H1 (cell line): ENCODE measurements at regions of chr11 and their contacts with region 1.

Region 1: DNA sequence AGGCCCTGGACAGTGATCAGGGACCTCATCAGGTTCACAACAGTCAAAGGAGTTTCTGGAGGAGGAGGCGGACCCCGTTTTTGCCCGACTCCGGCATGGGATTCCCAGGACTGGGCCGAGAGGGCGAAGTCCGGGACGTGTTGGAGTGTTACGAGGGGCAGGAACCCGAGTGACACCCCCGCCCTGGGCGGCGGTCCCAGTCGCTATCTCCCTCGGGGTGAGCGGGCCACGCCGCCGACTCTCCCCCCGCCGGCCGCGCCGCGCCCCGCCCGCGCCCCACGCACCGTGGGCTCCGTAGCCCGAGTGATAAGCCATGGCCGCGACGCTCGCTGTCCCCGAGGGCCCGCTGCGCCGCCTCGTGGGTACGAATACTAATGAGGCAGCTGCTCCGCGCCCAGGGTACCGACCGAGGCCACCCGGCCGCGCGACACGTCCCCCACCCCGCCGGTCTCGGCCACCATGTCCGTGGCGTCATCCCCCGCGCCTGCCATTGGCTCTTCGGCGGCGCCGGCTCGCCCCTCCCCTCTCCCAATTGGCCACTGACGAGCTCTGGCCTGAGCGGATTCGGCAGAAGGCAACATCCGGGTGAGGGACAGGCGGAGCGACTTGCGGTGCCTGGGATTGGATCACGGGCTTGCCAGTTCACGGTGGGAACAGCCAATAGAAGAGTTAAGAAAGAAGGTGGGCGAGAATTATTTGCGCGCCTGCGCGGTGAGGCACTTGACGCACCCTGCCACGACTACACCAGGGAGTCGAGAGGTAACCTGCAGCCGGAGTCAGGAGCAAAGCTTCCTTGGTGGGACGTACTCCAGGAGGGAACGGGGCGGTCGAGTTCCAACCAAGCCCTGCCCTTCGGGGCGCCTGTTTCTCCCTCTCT is at the start of gene YIF1A:
- DNase-seq: peak; percentile 95 to 98
- H3K4me3 ChIP-seq: peak within 1 kb of the TSS; percentile 76 to 94 (median 92)
- H3K27ac ChIP-seq: peak within 1 kb of the TSS; percentile 55
- H3K4me1 ChIP-seq: peaks cover 0 to 21% (median 6%) of the 10 kb centered on the region in 4 experiments; a peak in 5 of 7 replicates
- H3K27me3 ChIP-seq: peaks cover 2 to 27% (median 18%) of the 10 kb centered on the region in 4 experiments
- CTCF ChIP-seq: no peak
- EP300 ChIP-seq: no peak
- POLR2A ChIP-seq: peak in 1 of 2 experiments; percentile 72; a peak in 2 of 3 replicates
- RAD21 ChIP-seq: no peak
- total RNA-seq, gene YIF1A: 70.1 and 75.9 TPM in 2 replicates

Region 2: GRCh38 chr11:66044757-66045156 is 244.2 kb before region 1 on chr11:
- CTCF ChIA-PET with region 1: no interaction called
- POLR2A ChIA-PET with region 1: no interaction called
- DNase-seq: no peak
- H3K4me3 ChIP-seq: no peak overlapping the region
- H3K27ac ChIP-seq: no peak overlapping the region
- H3K4me1 ChIP-seq: peaks cover 0 to 21% (median 14%) of the 10 kb centered on the region in 4 experiments; a peak in 6 of 7 replicates
- H3K27me3 ChIP-seq: no peaks in the 10 kb centered on the region
- CTCF ChIP-seq: no peak
- EP300 ChIP-seq: no peak
- POLR2A ChIP-seq: no peak
- RAD21 ChIP-seq: no peak

Region 3: GRCh38 chr11:66268283-66268951 is 20.5 kb before region 1 on chr11 and contains the start of gene RAB1B:
- CTCF ChIA-PET with region 1: interaction called, 48 read pairs
- POLR2A ChIA-PET with region 1: interaction called, 125 read pairs
- DNase-seq: peak; percentile 99 to 100
- H3K4me3 ChIP-seq: peak within 1 kb of the TSS; percentile 57 to 91 (median 82)
- H3K27ac ChIP-seq: peak within 1 kb of the TSS; percentile 92; the same call in 1 of the 2 replicates
- H3K4me1 ChIP-seq: peaks cover 0 to 5% (median 3%) of the 10 kb centered on the region in 4 experiments; a peak in 5 of 7 replicates
- H3K27me3 ChIP-seq: no peaks in the 10 kb centered on the region
- CTCF ChIP-seq: no peak; a peak in 1 of 4 replicates
- EP300 ChIP-seq: no peak
- POLR2A ChIP-seq: peak in 1 of 2 experiments; percentile 85; a peak in 2 of 3 replicates
- RAD21 ChIP-seq: no peak
- total RNA-seq, gene RAB1B: 100 and 106 TPM in 2 replicates

Region 4: DNA sequence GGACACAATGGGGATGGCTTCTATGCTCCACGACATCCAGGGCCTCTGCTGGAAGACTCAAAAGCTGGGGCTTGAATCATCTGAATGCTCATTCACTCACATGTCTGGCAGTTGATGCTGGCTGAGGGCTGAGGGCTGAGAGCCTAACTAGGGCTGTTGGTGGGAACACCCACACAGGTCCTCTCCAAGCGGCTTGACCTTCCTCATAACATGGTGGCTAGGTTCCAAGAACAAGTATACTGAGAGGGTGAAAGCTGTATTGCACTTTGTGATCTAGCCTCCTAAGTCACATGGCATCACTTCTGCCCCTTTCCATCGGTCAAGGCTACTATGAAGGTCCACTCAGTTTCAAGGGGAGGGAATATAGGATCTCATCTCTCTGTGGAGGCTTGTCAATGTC is 10.3 kb after region 1 on chr11:
- CTCF ChIA-PET with region 1: interaction called, 37 read pairs
- POLR2A ChIA-PET with region 1: interaction called, 7 read pairs
- DNase-seq: no peak
- H3K4me3 ChIP-seq: no peak overlapping the region
- H3K27ac ChIP-seq: no peak overlapping the region
- H3K4me1 ChIP-seq: peaks cover 4 to 13% (median 6%) of the 10 kb centered on the region in 4 experiments; a peak in 6 of 7 replicates
- H3K27me3 ChIP-seq: peaks cover 0 to 3% (median 0%) of the 10 kb centered on the region in 4 experiments; a peak in 1 of 7 replicates
- CTCF ChIP-seq: no peak
- EP300 ChIP-seq: no peak
- POLR2A ChIP-seq: no peak
- RAD21 ChIP-seq: no peak